IMR-90 (cell line): ENCODE measurements at regions of chr22 and their contacts with region 1.

Region 1: DNA sequence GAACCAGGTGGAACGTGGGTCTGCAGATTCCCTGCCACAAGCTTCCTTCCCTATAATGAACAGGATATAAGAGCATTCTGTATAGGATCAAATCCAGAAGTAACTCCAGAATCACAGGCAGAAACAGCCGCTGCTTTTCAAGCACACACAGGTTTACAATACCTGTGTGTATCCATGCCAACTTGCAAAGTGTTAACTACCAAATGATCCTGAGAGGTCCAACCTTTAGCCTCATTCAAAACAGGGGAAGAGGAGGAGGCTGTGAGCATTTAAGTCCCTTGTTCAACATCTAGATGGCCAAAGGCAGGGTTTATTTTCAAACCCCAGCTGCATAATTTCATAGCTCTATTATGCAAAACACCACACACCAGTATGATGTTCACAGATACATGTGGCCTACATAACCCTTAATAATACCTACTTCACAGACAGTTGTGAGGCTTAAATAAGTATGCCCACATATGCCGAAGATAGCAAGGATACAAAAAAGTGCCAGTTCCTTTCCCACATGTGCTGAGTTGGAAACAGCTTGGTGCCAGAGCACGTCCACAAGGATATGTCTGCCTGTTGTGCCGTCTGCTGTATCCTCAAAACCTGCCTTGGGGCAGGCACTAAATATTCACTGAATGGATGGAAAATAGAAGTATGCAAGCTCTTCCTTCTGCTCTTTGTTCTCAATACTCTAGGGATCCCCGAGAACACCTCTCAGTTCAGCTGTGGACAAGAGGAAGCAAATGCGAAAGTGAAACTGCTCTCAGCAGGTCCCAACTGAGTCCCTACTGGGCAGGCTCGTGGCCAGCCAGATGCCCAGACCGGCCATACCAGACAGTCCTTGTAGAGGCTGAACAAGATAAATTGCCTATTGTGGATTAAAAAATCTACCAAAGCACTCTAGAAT is 66.8 kb downstream of the LARGE1 start:
- DNase-seq: peak; percentile 77
- ATAC-seq: peak; percentile 98
- H3K4me3 ChIP-seq: peak overlapping the region; percentile 48; the same call in 1 of the 2 replicates
- H3K27ac ChIP-seq: peak overlapping the region; percentile 35
- H3K4me1 ChIP-seq: peaks cover 12% of the 10 kb centered on the region
- H3K27me3 ChIP-seq: no peaks in the 10 kb centered on the region
- CTCF ChIP-seq: no peak
- POLR2A ChIP-seq: no peak
- RAD21 ChIP-seq: no peak

Region 2: GRCh38 chr22:33792832-33793231 is 60.6 kb before region 1 on chr22:
- CTCF ChIA-PET with region 1: no interaction called
- POLR2A ChIA-PET with region 1: no interaction called
- dilution Hi-C with region 1: no loop called
- in situ Hi-C with region 1: no loop called
- intact Hi-C with region 1: loop called (anchors 5 kb)
- DNase-seq: no peak
- ATAC-seq: no peak
- H3K4me3 ChIP-seq: no peak overlapping the region
- H3K27ac ChIP-seq: no peak overlapping the region
- H3K4me1 ChIP-seq: peaks cover 4% of the 10 kb centered on the region; the same call in 1 of the 2 replicates
- H3K27me3 ChIP-seq: no peaks in the 10 kb centered on the region
- CTCF ChIP-seq: no peak
- POLR2A ChIP-seq: no peak
- RAD21 ChIP-seq: no peak

Region 3: DNA sequence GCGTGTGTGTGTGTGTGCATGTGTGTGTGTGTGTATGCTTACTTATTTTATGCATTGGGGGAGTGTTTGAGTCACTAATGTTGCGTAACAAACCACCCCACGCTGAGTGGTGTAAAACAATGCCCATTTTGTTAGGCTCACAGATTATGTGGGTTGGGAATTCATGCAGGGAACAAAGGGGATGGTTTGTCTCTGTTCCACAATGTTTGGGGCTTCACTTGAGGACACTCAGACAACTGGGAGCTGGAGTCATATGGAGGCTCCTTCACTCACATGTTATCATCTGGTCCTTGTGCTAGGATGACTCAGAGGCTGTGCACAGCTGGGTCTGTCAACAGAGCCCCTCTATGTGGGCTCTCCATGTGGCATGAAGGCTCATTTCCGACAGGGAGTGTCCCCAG is 118.1 kb after region 1 on chr22:
- CTCF ChIA-PET with region 1: no interaction called
- POLR2A ChIA-PET with region 1: no interaction called
- dilution Hi-C with region 1: no loop called
- in situ Hi-C with region 1: no loop called
- intact Hi-C with region 1: no loop called
- DNase-seq: no peak
- ATAC-seq: no peak
- H3K4me3 ChIP-seq: no peak overlapping the region
- H3K27ac ChIP-seq: no peak overlapping the region
- H3K4me1 ChIP-seq: no peaks in the 10 kb centered on the region
- H3K27me3 ChIP-seq: no peaks in the 10 kb centered on the region
- CTCF ChIP-seq: no peak
- POLR2A ChIP-seq: no peak
- RAD21 ChIP-seq: no peak